A673 (cell line): ENCODE measurements at regions of chr9 and their contacts with region 1.

Region 1: GRCh38 chr9:101119206-101119819 is 90.8 kb downstream of the PLPPR1 start:
- DNase-seq: peak; percentile 56
- H3K4me3 ChIP-seq: no peak overlapping the region
- H3K27ac ChIP-seq: no peak overlapping the region
- H3K4me1 ChIP-seq: no peaks in the 10 kb centered on the region
- H3K27me3 ChIP-seq: peaks cover 4% of the 10 kb centered on the region
- CTCF ChIP-seq: peak; percentile 80

Region 2: DNA sequence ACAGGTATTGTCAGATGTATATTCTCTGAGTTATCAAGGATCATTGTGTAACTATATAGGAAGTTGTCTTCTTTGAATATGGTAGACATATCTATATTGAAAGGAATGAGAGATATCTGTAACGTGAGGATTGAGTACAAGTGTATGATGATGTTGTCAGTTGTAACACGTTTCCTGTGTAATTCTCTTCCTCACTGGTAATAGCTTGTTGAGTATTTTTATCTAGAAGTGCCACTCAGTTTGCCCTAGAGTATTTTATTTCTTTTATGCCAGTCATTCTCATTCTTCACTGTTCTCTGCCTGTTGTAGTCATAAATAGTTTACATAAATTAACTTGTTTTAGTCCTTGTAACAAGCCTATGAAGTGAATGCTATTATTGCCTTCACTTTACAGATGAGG is 93.3 kb after region 1 on chr9:
- CTCF ChIA-PET with region 1: no interaction called
- POLR2A ChIA-PET with region 1: no interaction called
- intact Hi-C with region 1: no loop called
- DNase-seq: no peak
- H3K4me3 ChIP-seq: no peak overlapping the region
- H3K27ac ChIP-seq: no peak overlapping the region
- H3K4me1 ChIP-seq: no peaks in the 10 kb centered on the region
- H3K27me3 ChIP-seq: peaks cover 6% of the 10 kb centered on the region
- CTCF ChIP-seq: no peak

Region 3: DNA sequence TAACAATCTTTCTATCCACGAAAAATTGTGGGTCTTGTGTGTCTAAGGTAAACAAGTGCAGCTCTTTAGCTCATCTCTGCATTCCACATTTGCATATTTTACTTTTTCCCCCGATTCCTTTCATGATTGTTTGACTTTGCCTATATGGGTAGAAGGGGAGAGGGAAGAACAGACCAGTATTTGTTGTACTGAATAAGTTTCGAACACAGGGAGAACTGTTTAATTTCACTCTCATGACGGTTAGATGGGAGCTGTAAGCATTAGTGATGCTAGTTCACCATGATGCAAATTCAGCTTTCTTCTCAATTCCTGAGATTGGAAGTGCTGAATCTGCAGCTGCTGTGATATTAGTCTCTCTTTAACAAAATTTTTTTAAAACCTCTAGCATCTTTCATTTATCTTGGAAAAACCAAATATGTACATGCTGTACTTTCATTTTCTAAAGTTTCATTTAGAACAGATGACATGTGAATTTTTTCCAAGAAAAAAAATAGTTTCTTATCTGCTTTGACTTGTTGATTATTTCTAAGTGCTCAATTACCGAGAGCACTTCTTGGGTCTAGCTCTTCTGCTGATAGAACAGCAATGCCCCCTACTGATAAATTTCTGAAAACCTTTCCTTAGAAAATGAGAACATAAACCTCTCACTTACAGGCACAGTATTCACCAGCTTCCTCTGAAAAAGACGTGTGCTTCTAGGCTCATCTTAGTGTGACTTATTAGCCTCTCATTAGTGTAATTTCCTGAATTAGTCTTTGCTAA is 116.0 kb after region 1 on chr9:
- CTCF ChIA-PET with region 1: interaction called, 5 read pairs
- POLR2A ChIA-PET with region 1: no interaction called
- intact Hi-C with region 1: loop called (anchors 2 kb)
- DNase-seq: peak; percentile 49
- H3K4me3 ChIP-seq: no peak overlapping the region
- H3K27ac ChIP-seq: no peak overlapping the region
- H3K4me1 ChIP-seq: no peaks in the 10 kb centered on the region
- H3K27me3 ChIP-seq: no peaks in the 10 kb centered on the region
- CTCF ChIP-seq: peak; percentile 65